ENCODE measurements at regions of chr5 and their contacts with region 1.

Region 1: GRCh38 chr5:114449860-114450421 is 88.1 kb downstream of the KCNN2 start:
- DNase-seq: peak; percentile 77
- ATAC-seq: peak; percentile 93
- H3K4me3 Mint-ChIP-seq: peak overlapping the region; percentile 52
- H3K27ac Mint-ChIP-seq: no peak overlapping the region
- H3K4me1 Mint-ChIP-seq: peaks cover 54% of the 10 kb centered on the region
- H3K27me3 Mint-ChIP-seq: no peaks in the 10 kb centered on the region
- CTCF ChIP-seq: peak; percentile 61

Region 2: GRCh38 chr5:113678924-113679575 is 770.9 kb before region 1 on chr5:
- CTCF ChIA-PET with region 1: interaction called, 24 read pairs
- POLR2A ChIA-PET with region 1: no interaction called
- DNase-seq: peak; percentile 38
- ATAC-seq: peak; percentile 79
- H3K4me3 Mint-ChIP-seq: no peak overlapping the region
- H3K27ac Mint-ChIP-seq: no peak overlapping the region
- H3K4me1 Mint-ChIP-seq: peaks cover 39% of the 10 kb centered on the region
- H3K27me3 Mint-ChIP-seq: no peaks in the 10 kb centered on the region
- CTCF ChIP-seq: peak; percentile 71

Region 3: GRCh38 chr5:114308017-114308416 is 141.9 kb before region 1 on chr5:
- CTCF ChIA-PET with region 1: interaction called, 13 read pairs
- POLR2A ChIA-PET with region 1: no interaction called
- DNase-seq: peak; percentile 24
- ATAC-seq: peak; percentile 53
- H3K4me3 Mint-ChIP-seq: no peak overlapping the region
- H3K27ac Mint-ChIP-seq: no peak overlapping the region
- H3K4me1 Mint-ChIP-seq: peaks cover 43% of the 10 kb centered on the region
- H3K27me3 Mint-ChIP-seq: peaks cover 2% of the 10 kb centered on the region; the same call in 1 of the 2 replicates
- CTCF ChIP-seq: no peak

Region 4: DNA sequence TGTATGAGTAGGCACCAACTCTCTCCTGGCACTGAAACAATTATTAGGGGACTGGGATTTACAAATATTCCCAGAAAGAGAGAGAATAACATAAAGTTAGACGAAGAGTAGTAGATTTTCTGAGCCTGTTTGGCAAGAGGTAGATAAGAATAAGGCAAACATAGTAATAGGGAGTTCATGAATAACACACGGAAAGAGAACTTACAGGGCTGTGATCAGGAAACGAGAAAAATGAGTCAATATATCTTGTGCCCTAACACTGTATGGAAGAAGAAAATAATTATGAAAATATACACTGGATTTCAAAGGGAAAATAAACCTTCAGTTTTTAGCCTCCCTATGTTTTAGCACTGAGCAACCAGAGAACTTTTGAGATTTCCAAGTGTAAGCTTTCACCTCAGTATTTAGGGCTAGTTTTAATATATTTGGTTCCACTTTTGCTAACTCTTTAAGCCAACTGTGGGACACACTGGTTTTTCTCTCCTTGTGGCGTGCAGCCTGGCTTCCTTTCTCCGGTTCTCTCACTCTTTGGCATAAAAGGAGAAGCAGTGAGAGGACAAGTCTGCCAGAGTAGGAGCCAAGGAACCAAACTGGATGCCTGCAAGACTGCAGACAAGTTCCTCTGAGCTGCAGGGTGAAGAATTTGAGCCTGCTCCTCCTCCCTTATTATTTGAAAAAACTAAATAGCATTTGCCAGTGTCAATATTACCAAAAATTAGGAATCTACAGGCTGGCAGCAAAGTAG is 94.7 kb before region 1 on chr5:
- CTCF ChIA-PET with region 1: interaction called, 156 read pairs
- POLR2A ChIA-PET with region 1: interaction called, 3 read pairs
- DNase-seq: no peak
- ATAC-seq: peak; percentile 49
- H3K4me3 Mint-ChIP-seq: no peak overlapping the region
- H3K27ac Mint-ChIP-seq: peak overlapping the region; percentile 31; the same call in 1 of the 2 replicates
- H3K4me1 Mint-ChIP-seq: peaks cover 53% of the 10 kb centered on the region
- H3K27me3 Mint-ChIP-seq: no peaks in the 10 kb centered on the region
- CTCF ChIP-seq: no peak

Region 5: GRCh38 chr5:114434396-114435219 is 15.3 kb before region 1 on chr5:
- CTCF ChIA-PET with region 1: interaction called, 11 read pairs
- POLR2A ChIA-PET with region 1: no interaction called
- DNase-seq: no peak
- ATAC-seq: peak; percentile 65
- H3K4me3 Mint-ChIP-seq: no peak overlapping the region
- H3K27ac Mint-ChIP-seq: peak overlapping the region; percentile 96
- H3K4me1 Mint-ChIP-seq: peaks cover 50% of the 10 kb centered on the region
- H3K27me3 Mint-ChIP-seq: no peaks in the 10 kb centered on the region
- CTCF ChIP-seq: no peak